BJ (cell line): ENCODE measurements at regions of chr2 and their contacts with region 1.

Region 1: GRCh38 chr2:37389989-37390765 is 45.7 kb downstream of the QPCT start:
- DNase-seq: no peak
- H3K4me3 ChIP-seq: no peak overlapping the region
- H3K27me3 ChIP-seq: no peaks in the 10 kb centered on the region; the same call in 1 of the 2 replicates
- CTCF ChIP-seq: no peak

Region 2: GRCh38 chr2:37370666-37371065 is 19.5 kb before region 1 on chr2:
- CTCF ChIA-PET with region 1: no interaction called
- POLR2A ChIA-PET with region 1: no interaction called
- DNase-seq: no peak
- H3K4me3 ChIP-seq: no peak overlapping the region
- H3K27me3 ChIP-seq: peaks cover 2% of the 10 kb centered on the region; the same call in 1 of the 2 replicates
- CTCF ChIP-seq: no peak

Region 3: GRCh38 chr2:37425408-37425807 is 35.2 kb after region 1 on chr2:
- CTCF ChIA-PET with region 1: no interaction called
- POLR2A ChIA-PET with region 1: no interaction called
- DNase-seq: no peak
- H3K4me3 ChIP-seq: no peak overlapping the region
- H3K27me3 ChIP-seq: no peaks in the 10 kb centered on the region
- CTCF ChIP-seq: no peak

Region 4: DNA sequence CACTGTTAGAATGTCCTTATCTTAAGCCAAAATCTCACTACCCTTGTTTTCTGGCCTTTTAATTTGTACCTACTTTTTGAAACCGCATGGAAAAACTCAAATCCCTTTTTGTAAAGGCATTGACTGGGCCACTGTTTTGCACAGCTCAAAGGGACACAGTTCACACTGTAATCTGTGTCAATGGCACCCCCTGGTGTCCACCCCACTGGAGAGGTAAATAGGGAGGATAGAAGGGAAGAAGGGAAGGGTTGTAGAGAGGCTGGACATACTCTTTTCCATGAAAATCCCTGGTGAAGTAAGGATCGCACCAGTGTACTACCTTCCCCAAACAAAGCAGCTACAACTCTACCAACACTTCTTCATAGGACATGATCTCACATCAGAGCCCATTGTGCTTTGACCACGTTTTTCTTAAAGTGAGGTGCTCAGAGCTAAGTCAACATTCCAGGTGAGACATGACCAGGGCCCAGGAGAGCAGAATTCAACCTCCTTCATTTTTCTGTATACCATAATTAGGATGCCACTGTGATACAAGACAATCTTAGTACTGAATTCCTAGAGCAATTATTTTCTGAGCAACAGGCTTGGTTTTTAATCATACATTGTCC is 442.5 kb after region 1 on chr2:
- CTCF ChIA-PET with region 1: interaction called, 32 read pairs
- POLR2A ChIA-PET with region 1: no interaction called
- DNase-seq: no peak
- H3K4me3 ChIP-seq: no peak overlapping the region
- H3K27me3 ChIP-seq: no peaks in the 10 kb centered on the region
- CTCF ChIP-seq: peak; percentile 74

Region 5: GRCh38 chr2:37890893-37891495 is 500.8 kb after region 1 on chr2:
- CTCF ChIA-PET with region 1: interaction called, 15 read pairs
- POLR2A ChIA-PET with region 1: no interaction called
- DNase-seq: no peak
- H3K4me3 ChIP-seq: no peak overlapping the region
- H3K27me3 ChIP-seq: no peaks in the 10 kb centered on the region
- CTCF ChIP-seq: peak; percentile 84